ENCODE measurements at regions of chr17 and their contacts with region 1.

Region 1: GRCh38 chr17:75749545-75750389 is 15.2 kb downstream of the GALK1 start:
- DNase-seq: peak; percentile 81 to 87 (median 86)
- ATAC-seq: peak; percentile 80
- H3K4me3 ChIP-seq: no peak overlapping the region
- H3K27ac ChIP-seq: no peak overlapping the region
- H3K4me1 ChIP-seq: peaks cover 10 to 48% of the 10 kb centered on the region in 2 experiments
- H3K27me3 ChIP-seq: no peaks in the 10 kb centered on the region
- CTCF ChIP-seq: peak; percentile 92 to 94 (median 94)
- EP300 ChIP-seq: no peak
- POLR2A ChIP-seq: no peak
- RAD21 ChIP-seq: peak; percentile 67 to 83

Region 2: GRCh38 chr17:75430159-75430974 is 319.4 kb before region 1 on chr17:
- CTCF ChIA-PET with region 1: interaction called, 5 read pairs
- POLR2A ChIA-PET with region 1: interaction called, 4 read pairs
- in situ Hi-C with region 1: loop called (anchors 5 kb)
- intact Hi-C with region 1: loop called (anchors 5 kb)
- DNase-seq: peak in 2 of 4 experiments; percentile 12 to 20
- ATAC-seq: peak; percentile 32; the same call in 1 of the 3 replicates
- H3K4me3 ChIP-seq: no peak overlapping the region
- H3K27ac ChIP-seq: no peak overlapping the region
- H3K4me1 ChIP-seq: peaks cover 0 to 9% of the 10 kb centered on the region in 2 experiments; a peak in 4 of 5 replicates
- H3K27me3 ChIP-seq: peaks cover 6 to 7% of the 10 kb centered on the region in 2 experiments; a peak in 4 of 5 replicates
- CTCF ChIP-seq: no peak
- EP300 ChIP-seq: no peak
- POLR2A ChIP-seq: no peak
- RAD21 ChIP-seq: no peak

Region 3: DNA sequence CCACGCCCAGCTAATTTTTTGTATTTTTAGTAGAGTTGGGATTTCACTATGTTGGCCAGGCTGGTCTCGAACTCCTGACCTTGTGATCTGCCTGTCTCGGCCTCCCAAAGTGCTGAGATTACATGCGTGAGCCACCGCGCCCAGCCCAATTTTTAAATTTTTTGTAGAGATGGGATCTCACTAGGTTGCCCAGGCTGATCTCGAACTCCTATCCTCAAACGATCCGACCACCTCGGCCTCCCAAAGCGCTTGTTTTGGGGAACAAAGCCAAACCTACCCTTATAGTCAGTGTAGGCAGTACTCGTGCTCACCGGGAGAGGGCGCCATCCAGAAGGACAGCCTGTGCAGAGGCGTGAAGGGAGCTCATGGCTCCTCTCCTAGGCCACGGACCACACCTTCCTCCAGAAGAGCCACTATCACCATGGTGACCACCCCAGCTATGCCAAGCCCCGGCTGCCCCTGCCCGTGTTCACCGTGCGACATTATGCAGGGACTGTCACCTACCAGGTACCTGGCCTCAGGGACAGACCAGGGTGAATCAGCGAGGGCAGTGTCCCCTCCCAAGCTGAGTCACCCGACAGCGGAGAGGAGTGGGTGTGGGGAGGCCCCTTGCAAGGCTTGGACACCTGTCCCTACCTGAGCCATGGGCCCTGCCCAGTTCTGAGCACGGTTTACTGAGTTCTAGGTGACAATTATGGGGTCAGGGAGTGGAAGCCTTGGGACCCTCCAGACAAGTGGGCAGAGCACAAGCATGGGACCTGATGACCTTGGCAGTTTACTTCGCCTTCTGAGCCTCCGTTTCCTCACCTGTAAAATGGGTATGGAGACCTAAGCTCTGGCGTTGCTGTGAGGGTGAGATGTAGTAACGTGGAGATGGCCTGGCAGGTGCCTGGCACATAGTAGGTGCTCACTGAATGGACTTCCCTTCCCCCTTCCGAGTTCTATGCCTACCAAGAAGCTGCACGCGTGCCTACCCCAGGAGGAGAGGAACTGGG is 148.4 kb before region 1 on chr17:
- CTCF ChIA-PET with region 1: no interaction called
- POLR2A ChIA-PET with region 1: interaction called, 5 read pairs
- in situ Hi-C with region 1: no loop called
- intact Hi-C with region 1: loop called (anchors 5 kb)
- DNase-seq: peak; percentile 83 to 86 (median 86)
- ATAC-seq: peak; percentile 97
- H3K4me3 ChIP-seq: no peak overlapping the region
- H3K27ac ChIP-seq: no peak overlapping the region
- H3K4me1 ChIP-seq: peaks cover 3 to 22% of the 10 kb centered on the region in 2 experiments; a peak in 3 of 5 replicates
- H3K27me3 ChIP-seq: peaks cover 0 to 15% of the 10 kb centered on the region in 2 experiments; a peak in 3 of 5 replicates
- CTCF ChIP-seq: peak; percentile 90 to 96 (median 92)
- EP300 ChIP-seq: no peak
- POLR2A ChIP-seq: no peak
- RAD21 ChIP-seq: peak; percentile 31 to 72

Region 4: DNA sequence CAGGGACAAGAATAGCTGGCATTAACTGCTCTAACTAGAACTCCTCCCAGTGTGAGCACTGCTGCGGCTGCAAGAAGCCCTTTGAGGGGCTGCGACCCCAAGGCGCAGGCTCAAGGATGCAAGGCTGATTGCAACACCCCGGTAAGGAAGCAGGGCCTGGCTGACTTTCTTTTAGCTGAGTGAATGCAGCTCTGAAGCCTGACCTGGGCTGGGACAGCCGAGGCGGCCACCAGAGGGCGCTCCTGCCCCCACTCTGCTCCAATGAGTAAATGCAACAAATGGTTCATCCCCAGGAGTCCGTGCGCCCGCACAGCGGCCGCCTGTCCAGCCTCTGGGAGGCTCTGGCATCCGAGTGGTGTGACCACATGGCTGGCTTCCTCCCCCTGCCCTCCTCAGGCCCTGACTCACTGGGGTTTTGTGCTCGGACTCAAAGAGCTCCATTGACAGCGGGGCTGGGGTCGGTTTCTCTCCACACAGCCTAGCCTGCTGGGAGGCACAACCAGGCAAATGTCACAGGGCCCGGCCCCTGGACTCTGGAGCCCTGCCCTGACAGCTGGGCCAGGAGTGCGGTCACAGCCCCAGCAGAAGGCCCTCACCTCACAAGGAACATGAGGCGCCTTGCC is 116.8 kb before region 1 on chr17 and contains the start of gene SMIM5:
- CTCF ChIA-PET with region 1: interaction called, 26 read pairs
- POLR2A ChIA-PET with region 1: interaction called, 6 read pairs
- in situ Hi-C with region 1: no loop called
- intact Hi-C with region 1: loop called (anchors 1 kb)
- DNase-seq: peak; percentile 88 to 89 (median 88)
- ATAC-seq: peak; percentile 90
- H3K4me3 ChIP-seq: no peak within 1 kb of the TSS
- H3K27ac ChIP-seq: peak within 1 kb of the TSS; percentile 51; the same call in 2 of the 3 replicates
- H3K4me1 ChIP-seq: peaks cover 18 to 59% of the 10 kb centered on the region in 2 experiments
- H3K27me3 ChIP-seq: no peaks in the 10 kb centered on the region
- CTCF ChIP-seq: peak; percentile 90 to 96 (median 92)
- EP300 ChIP-seq: no peak
- POLR2A ChIP-seq: no peak
- RAD21 ChIP-seq: peak; percentile 47 to 79
- polyA plus RNA-seq, gene SMIM5: not detected

Region 5: GRCh38 chr17:75679706-75680442 is 69.9 kb before region 1 on chr17:
- CTCF ChIA-PET with region 1: interaction called, 16 read pairs
- POLR2A ChIA-PET with region 1: interaction called, 4 read pairs
- in situ Hi-C with region 1: no loop called
- intact Hi-C with region 1: loop called (anchors 1 kb)
- DNase-seq: no peak
- ATAC-seq: no peak
- H3K4me3 ChIP-seq: no peak overlapping the region
- H3K27ac ChIP-seq: no peak overlapping the region
- H3K4me1 ChIP-seq: peaks cover 0 to 15% of the 10 kb centered on the region in 2 experiments; a peak in 2 of 5 replicates
- H3K27me3 ChIP-seq: no peaks in the 10 kb centered on the region
- CTCF ChIP-seq: peak in 1 of 3 experiments; percentile 21; a peak in 2 of 6 replicates
- EP300 ChIP-seq: no peak
- POLR2A ChIP-seq: no peak
- RAD21 ChIP-seq: peak in 1 of 2 experiments; percentile 19; a peak in 1 of 4 replicates

Region 6: GRCh38 chr17:75704963-75705875 is 44.5 kb before region 1 on chr17:
- CTCF ChIA-PET with region 1: no interaction called
- POLR2A ChIA-PET with region 1: no interaction called
- in situ Hi-C with region 1: no loop called
- intact Hi-C with region 1: no loop called
- DNase-seq: no peak
- ATAC-seq: no peak
- H3K4me3 ChIP-seq: no peak overlapping the region
- H3K27ac ChIP-seq: no peak overlapping the region
- H3K4me1 ChIP-seq: peaks cover 0 to 19% of the 10 kb centered on the region in 2 experiments; a peak in 4 of 5 replicates
- H3K27me3 ChIP-seq: no peaks in the 10 kb centered on the region
- CTCF ChIP-seq: no peak
- EP300 ChIP-seq: no peak
- POLR2A ChIP-seq: no peak
- RAD21 ChIP-seq: no peak